B cell (primary cell): ENCODE measurements at regions of chr12 and their contacts with region 1.

Region 1: DNA sequence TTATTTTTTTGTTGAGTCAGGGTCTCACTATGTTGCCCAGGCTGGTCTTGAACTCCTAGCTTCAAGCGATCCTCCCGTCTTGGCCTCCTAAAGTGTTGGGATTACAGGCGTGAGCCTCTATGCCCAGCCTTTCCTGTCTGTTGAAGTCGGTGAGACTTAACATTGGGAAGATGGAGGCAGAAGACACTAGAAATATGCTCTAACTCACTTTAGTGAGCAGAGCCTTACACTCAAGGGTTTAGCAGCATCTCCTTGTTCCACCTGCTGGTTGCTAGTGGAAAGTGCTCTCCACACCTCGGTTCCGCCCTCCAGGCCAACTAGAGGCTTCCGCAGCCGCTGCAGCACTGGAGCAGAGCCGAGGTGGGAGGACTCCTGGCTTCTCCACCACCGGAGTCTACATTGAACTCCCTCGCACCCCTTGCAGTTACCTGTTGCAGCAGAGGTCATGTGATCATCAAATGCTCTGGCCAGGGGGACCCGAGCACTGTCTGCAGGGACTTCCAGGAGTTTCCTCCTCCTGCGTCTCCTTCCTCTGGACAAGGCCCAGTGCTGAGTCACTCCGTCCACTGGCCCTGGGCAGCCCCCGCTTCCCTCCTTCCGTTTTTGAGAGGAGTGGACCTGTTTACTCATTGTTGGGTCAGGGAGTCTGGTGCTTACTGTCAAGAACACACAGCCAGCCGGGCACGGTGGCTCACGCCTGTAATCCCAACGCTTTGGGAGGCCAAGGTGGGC is 9.4 kb upstream of the HVCN1 start:
- DNase-seq: peak; percentile 90
- ATAC-seq: peak; percentile 100
- H3K4me3 ChIP-seq: peak overlapping the region in 2 of 5 experiments; percentile 21 to 29
- H3K4me3 Mint-ChIP-seq: peak overlapping the region; percentile 64
- H3K27ac ChIP-seq: peak overlapping the region in 1 of 2 donors; percentile 58
- H3K27ac Mint-ChIP-seq: peak overlapping the region; percentile 94
- H3K4me1 ChIP-seq: peaks cover 36 to 37% of the 10 kb centered on the region in 2 donors
- H3K4me1 Mint-ChIP-seq: peaks cover 47% of the 10 kb centered on the region
- H3K27me3 ChIP-seq: no peaks in the 10 kb centered on the region
- H3K27me3 Mint-ChIP-seq: no peaks in the 10 kb centered on the region
- CTCF ChIP-seq: peak; percentile 82

Region 2: GRCh38 chr12:110088936-110089335 is 609.4 kb before region 1 on chr12:
- CTCF ChIA-PET with region 1: no interaction called
- POLR2A ChIA-PET with region 1: no interaction called
- intact Hi-C with region 1: no loop called
- DNase-seq: no peak
- ATAC-seq: no peak
- H3K4me3 ChIP-seq: no peak overlapping the region
- H3K4me3 Mint-ChIP-seq: no peak overlapping the region
- H3K27ac ChIP-seq: no peak overlapping the region
- H3K27ac Mint-ChIP-seq: no peak overlapping the region
- H3K4me1 ChIP-seq: no peaks in the 10 kb centered on the region
- H3K4me1 Mint-ChIP-seq: peaks cover 1% of the 10 kb centered on the region
- H3K27me3 ChIP-seq: peaks cover 0 to 9% (median 2%) of the 10 kb centered on the region in 4 experiments
- H3K27me3 Mint-ChIP-seq: peaks cover 30% of the 10 kb centered on the region
- CTCF ChIP-seq: no peak

Region 3: DNA sequence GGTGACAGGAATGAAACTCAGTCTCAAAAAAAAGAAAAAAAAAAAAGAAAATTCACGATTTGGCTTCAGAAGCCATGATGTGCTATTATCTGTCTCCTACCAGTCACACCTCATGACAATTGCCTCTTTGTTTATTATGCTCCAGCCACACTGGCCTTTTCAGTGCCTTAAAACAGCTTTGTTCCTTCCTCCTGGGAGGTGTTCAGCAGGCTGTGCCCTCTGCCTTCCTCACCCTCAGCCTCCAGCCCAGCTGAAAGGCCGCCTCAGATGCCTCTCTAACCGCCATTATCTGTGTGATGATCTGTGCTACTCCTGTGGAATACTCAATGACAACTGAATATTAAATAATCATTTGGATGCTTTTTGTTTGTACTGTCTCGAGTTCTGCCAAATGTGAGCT is 239.6 kb before region 1 on chr12:
- CTCF ChIA-PET with region 1: no interaction called
- POLR2A ChIA-PET with region 1: interaction called, 13 read pairs
- intact Hi-C with region 1: no loop called
- DNase-seq: no peak
- ATAC-seq: no peak
- H3K4me3 ChIP-seq: no peak overlapping the region
- H3K4me3 Mint-ChIP-seq: no peak overlapping the region
- H3K27ac ChIP-seq: no peak overlapping the region
- H3K27ac Mint-ChIP-seq: peak overlapping the region; percentile 59
- H3K4me1 ChIP-seq: peaks cover 31% of the 10 kb centered on the region in 2 donors
- H3K4me1 Mint-ChIP-seq: peaks cover 26% of the 10 kb centered on the region
- H3K27me3 ChIP-seq: no peaks in the 10 kb centered on the region
- H3K27me3 Mint-ChIP-seq: no peaks in the 10 kb centered on the region
- CTCF ChIP-seq: no peak

Region 4: DNA sequence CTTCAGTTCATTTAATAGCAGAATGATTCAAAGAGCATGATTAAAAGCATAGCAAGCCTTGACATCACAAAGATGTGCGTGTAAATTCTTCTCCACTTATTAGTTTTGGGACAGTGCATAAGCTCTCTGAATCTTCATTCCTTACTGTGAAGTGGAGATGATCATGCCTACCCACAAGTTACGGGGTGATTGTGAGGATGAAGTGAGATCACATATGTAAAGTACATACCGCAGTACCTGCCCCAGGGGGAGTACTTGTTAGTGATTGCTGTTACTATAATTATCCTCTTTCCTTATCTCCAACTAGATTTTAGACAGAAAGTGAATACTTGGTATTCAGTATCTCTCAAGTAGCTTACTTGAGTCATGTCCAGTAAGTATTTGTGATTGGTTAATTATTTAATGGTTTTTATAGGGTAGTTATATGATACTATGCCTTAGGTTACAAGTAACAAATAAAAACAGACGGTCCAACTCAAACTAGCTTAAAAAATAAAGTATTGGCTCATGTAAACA is 190.2 kb before region 1 on chr12:
- CTCF ChIA-PET with region 1: no interaction called
- POLR2A ChIA-PET with region 1: interaction called, 3 read pairs
- intact Hi-C with region 1: loop called (anchors 1 kb)
- DNase-seq: no peak
- ATAC-seq: no peak
- H3K4me3 ChIP-seq: no peak overlapping the region
- H3K4me3 Mint-ChIP-seq: no peak overlapping the region
- H3K27ac ChIP-seq: no peak overlapping the region
- H3K27ac Mint-ChIP-seq: no peak overlapping the region
- H3K4me1 ChIP-seq: no peaks in the 10 kb centered on the region
- H3K4me1 Mint-ChIP-seq: no peaks in the 10 kb centered on the region
- H3K27me3 ChIP-seq: no peaks in the 10 kb centered on the region
- H3K27me3 Mint-ChIP-seq: no peaks in the 10 kb centered on the region
- CTCF ChIP-seq: no peak

Region 5: GRCh38 chr12:110555577-110556406 is 142.5 kb before region 1 on chr12:
- CTCF ChIA-PET with region 1: interaction called, 5 read pairs
- POLR2A ChIA-PET with region 1: interaction called, 6 read pairs
- intact Hi-C with region 1: loop called (anchors 1 kb)
- DNase-seq: no peak
- ATAC-seq: no peak
- H3K4me3 ChIP-seq: no peak overlapping the region
- H3K4me3 Mint-ChIP-seq: no peak overlapping the region
- H3K27ac ChIP-seq: no peak overlapping the region
- H3K27ac Mint-ChIP-seq: no peak overlapping the region
- H3K4me1 ChIP-seq: peaks cover 27 to 31% of the 10 kb centered on the region in 2 donors
- H3K4me1 Mint-ChIP-seq: peaks cover 50% of the 10 kb centered on the region
- H3K27me3 ChIP-seq: no peaks in the 10 kb centered on the region
- H3K27me3 Mint-ChIP-seq: no peaks in the 10 kb centered on the region
- CTCF ChIP-seq: no peak

Region 6: GRCh38 chr12:110613771-110614684 is 84.3 kb before region 1 on chr12 and contains the start of gene TCTN1:
- CTCF ChIA-PET with region 1: interaction called, 64 read pairs
- POLR2A ChIA-PET with region 1: interaction called, 3 read pairs
- intact Hi-C with region 1: loop called (anchors 1 kb)
- DNase-seq: peak; percentile 94
- ATAC-seq: peak; percentile 99
- H3K4me3 ChIP-seq: peak within 1 kb of the TSS; percentile 57 to 84 (median 70)
- H3K4me3 Mint-ChIP-seq: peak within 1 kb of the TSS; percentile 91
- H3K27ac ChIP-seq: peak within 1 kb of the TSS; percentile 83 to 98
- H3K27ac Mint-ChIP-seq: peak within 1 kb of the TSS; percentile 96
- H3K4me1 ChIP-seq: peaks cover 42 to 65% of the 10 kb centered on the region in 2 donors
- H3K4me1 Mint-ChIP-seq: peaks cover 49% of the 10 kb centered on the region
- H3K27me3 ChIP-seq: no peaks in the 10 kb centered on the region
- H3K27me3 Mint-ChIP-seq: no peaks in the 10 kb centered on the region
- CTCF ChIP-seq: no peak
- total RNA-seq, gene TCTN1: 69.8 and 74.5 TPM in 2 replicates

Region 7: DNA sequence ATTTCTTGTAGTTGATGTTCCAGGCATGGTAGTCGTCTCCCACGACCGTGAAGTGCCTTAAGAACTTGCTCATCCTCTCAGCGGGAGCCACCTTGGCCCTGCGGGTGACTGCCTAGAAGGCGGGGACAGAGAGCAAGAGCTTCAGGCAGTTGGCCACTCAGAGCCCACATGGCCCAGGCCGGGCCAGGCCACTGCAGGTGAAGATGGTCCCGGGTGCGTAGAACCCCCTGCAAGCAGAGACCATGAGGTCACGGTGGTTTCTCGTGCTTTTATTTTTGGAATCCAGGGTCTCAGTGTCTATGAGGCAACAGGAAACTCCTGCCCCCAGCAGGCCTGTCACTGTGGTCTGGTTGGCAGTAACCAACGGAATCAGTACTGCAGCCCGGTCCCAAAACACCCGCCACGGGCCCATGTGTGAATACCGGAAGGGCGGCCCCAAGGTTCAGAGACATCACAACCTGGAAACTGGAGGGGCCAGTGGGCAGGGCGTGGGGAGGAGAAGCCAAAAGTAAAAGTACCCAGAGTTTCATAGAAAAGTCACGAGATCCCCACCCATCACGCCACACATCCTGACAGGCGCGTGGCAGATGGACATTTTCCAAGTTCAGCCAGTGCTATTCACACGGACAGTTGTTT is 36.9 kb before region 1 on chr12:
- CTCF ChIA-PET with region 1: interaction called, 9 read pairs
- POLR2A ChIA-PET with region 1: no interaction called
- intact Hi-C with region 1: loop called (anchors 2 kb)
- DNase-seq: peak; percentile 93
- ATAC-seq: peak; percentile 85
- H3K4me3 ChIP-seq: peak overlapping the region in 4 of 5 experiments; percentile 5 to 44 (median 16)
- H3K4me3 Mint-ChIP-seq: peak overlapping the region; percentile 92
- H3K27ac ChIP-seq: peak overlapping the region; percentile 96 to 99
- H3K27ac Mint-ChIP-seq: peak overlapping the region; percentile 98
- H3K4me1 ChIP-seq: peaks cover 59 to 82% of the 10 kb centered on the region in 2 donors
- H3K4me1 Mint-ChIP-seq: peaks cover 81% of the 10 kb centered on the region
- H3K27me3 ChIP-seq: no peaks in the 10 kb centered on the region
- H3K27me3 Mint-ChIP-seq: no peaks in the 10 kb centered on the region
- CTCF ChIP-seq: no peak

Region 8: GRCh38 chr12:110677206-110677911 is 21.0 kb before region 1 on chr12:
- CTCF ChIA-PET with region 1: interaction called, 6 read pairs
- POLR2A ChIA-PET with region 1: interaction called, 4 read pairs
- intact Hi-C with region 1: loop called (anchors 1 kb)
- DNase-seq: peak; percentile 76
- ATAC-seq: peak; percentile 65
- H3K4me3 ChIP-seq: peak overlapping the region; percentile 1 to 39 (median 30)
- H3K4me3 Mint-ChIP-seq: peak overlapping the region; percentile 70
- H3K27ac ChIP-seq: peak overlapping the region; percentile 68 to 82
- H3K27ac Mint-ChIP-seq: peak overlapping the region; percentile 82
- H3K4me1 ChIP-seq: peaks cover 96 to 100% of the 10 kb centered on the region in 2 donors
- H3K4me1 Mint-ChIP-seq: peaks cover 85% of the 10 kb centered on the region
- H3K27me3 ChIP-seq: no peaks in the 10 kb centered on the region
- H3K27me3 Mint-ChIP-seq: no peaks in the 10 kb centered on the region
- CTCF ChIP-seq: no peak